ENCODE measurements at regions of chr10 and their contacts with region 1.

Region 1: DNA sequence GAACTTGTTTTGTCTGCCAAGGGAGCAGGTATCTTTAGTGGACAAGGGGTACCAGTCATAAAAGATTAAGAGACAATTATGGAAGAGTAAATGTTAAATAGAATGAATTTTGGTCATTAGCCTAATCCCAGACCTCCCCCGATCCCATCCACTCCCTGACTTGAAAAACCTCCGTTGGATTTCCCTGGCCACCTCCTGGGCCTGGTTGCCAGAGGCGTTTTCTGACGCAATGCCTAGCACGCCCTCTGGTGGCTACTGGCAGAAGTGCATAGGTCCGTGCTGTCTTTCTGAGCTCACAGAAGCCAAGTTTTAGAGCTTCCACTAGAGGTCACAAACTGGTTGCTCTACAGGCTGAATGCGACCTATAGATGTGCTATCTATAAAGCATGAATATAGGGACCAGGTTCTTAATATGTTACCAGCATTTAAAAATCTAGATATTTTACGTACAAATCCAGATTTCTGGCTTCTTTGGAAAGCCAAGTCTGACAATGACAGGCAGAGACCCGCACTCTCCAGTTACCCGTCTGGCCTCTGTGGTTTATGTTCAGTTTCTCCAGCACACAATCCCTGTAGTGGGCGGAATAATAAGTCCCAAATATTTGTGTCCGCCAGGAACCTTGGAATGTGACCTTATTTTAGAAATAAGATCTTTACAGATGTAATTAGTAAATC is 39.8 kb downstream of the SPOCK2 start:
- DNase-seq: peak; percentile 94
- H3K4me3 ChIP-seq: no peak overlapping the region
- H3K27ac ChIP-seq: no peak overlapping the region
- H3K4me1 ChIP-seq: no peaks in the 10 kb centered on the region
- H3K27me3 ChIP-seq: no peaks in the 10 kb centered on the region
- CTCF ChIP-seq: peak; percentile 96 to 99
- POLR2A ChIP-seq: no peak

Region 2: GRCh38 chr10:71902351-71902750 is 146.2 kb before region 1 on chr10:
- CTCF ChIA-PET with region 1: interaction called, 199 read pairs
- POLR2A ChIA-PET with region 1: no interaction called
- dilution Hi-C with region 1: no loop called
- intact Hi-C with region 1: no loop called
- DNase-seq: no peak
- H3K4me3 ChIP-seq: no peak overlapping the region
- H3K27ac ChIP-seq: no peak overlapping the region
- H3K4me1 ChIP-seq: peaks cover 4% of the 10 kb centered on the region
- H3K27me3 ChIP-seq: no peaks in the 10 kb centered on the region
- CTCF ChIP-seq: no peak
- POLR2A ChIP-seq: no peak

Region 3: GRCh38 chr10:71974489-71975021 is 74.0 kb before region 1 on chr10:
- CTCF ChIA-PET with region 1: interaction called, 31 read pairs
- POLR2A ChIA-PET with region 1: no interaction called
- dilution Hi-C with region 1: no loop called
- intact Hi-C with region 1: loop called (anchors 1 kb)
- DNase-seq: peak; percentile 45
- H3K4me3 ChIP-seq: no peak overlapping the region
- H3K27ac ChIP-seq: peak overlapping the region; percentile 16
- H3K4me1 ChIP-seq: peaks cover 44% of the 10 kb centered on the region
- H3K27me3 ChIP-seq: no peaks in the 10 kb centered on the region
- CTCF ChIP-seq: no peak
- POLR2A ChIP-seq: no peak

Region 4: DNA sequence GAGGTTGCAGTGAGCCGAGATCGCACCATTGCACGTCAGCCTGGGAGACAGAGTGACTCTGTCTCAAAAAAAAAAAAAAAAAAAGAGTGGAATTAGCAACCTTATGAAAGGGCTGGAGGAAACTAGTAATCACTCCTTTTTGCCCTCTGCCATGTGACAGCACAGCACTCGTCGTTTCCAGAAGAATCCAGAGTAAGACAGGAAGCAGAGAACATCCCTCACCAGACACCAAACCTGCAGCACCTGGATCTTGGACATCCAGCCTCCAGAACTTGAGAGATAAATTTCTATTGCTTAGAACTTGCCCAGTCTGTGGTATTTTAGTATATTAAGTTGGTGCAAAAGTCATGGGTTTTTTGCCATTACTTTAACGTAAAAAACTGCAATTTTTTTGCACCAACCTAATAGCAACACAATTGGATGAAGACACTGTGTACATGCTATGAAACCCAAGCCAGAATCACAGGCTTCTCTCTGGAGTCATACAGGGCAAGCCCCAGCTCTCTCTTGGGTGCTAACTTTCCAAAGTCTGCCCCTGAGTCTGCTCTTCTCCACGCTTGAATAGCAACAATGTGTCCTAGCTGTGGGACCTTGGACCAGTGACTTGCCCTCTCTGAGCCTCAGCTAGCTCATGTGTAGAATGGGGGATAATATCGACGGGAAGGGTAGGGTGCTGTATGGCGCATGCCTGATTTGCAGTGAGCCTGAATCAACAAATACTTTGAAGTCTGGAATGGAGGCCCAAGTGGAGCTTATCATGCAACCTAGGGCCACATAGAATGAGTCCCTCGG is 29.3 kb before region 1 on chr10:
- CTCF ChIA-PET with region 1: interaction called, 13 read pairs
- POLR2A ChIA-PET with region 1: no interaction called
- dilution Hi-C with region 1: no loop called
- intact Hi-C with region 1: no loop called
- DNase-seq: no peak
- H3K4me3 ChIP-seq: no peak overlapping the region
- H3K27ac ChIP-seq: no peak overlapping the region
- H3K4me1 ChIP-seq: peaks cover 7% of the 10 kb centered on the region
- H3K27me3 ChIP-seq: peaks cover 2 to 7% of the 10 kb centered on the region in 2 experiments
- CTCF ChIP-seq: no peak
- POLR2A ChIP-seq: no peak

Region 5: GRCh38 chr10:72069751-72070526 is 21.4 kb after region 1 on chr10:
- CTCF ChIA-PET with region 1: interaction called, 27 read pairs
- POLR2A ChIA-PET with region 1: no interaction called
- dilution Hi-C with region 1: no loop called
- intact Hi-C with region 1: no loop called
- DNase-seq: no peak
- H3K4me3 ChIP-seq: no peak overlapping the region
- H3K27ac ChIP-seq: no peak overlapping the region
- H3K4me1 ChIP-seq: no peaks in the 10 kb centered on the region
- H3K27me3 ChIP-seq: no peaks in the 10 kb centered on the region
- CTCF ChIP-seq: peak in 1 of 2 donors; percentile 1
- POLR2A ChIP-seq: no peak

Region 6: DNA sequence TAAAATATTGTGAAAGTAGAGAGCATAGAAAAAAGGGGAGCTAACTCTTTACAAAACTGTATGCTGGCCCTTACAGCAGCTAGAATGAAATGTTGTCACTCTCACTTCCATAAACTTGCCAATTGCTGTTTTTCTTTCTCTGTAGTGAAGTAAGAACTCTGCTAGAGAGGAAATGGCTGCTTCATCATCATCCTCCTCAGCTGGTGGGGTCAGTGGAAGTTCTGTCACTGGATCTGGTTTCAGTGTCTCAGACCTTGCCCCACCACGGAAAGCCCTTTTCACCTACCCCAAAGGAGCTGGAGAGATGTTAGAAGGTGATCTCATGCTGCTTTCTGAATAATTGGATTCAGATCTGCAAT is 175.1 kb after region 1 on chr10:
- CTCF ChIA-PET with region 1: interaction called, 55 read pairs
- POLR2A ChIA-PET with region 1: no interaction called
- dilution Hi-C with region 1: no loop called
- intact Hi-C with region 1: loop called (anchors 1 kb)
- DNase-seq: peak; percentile 59
- H3K4me3 ChIP-seq: no peak overlapping the region
- H3K27ac ChIP-seq: peak overlapping the region; percentile 67
- H3K4me1 ChIP-seq: peaks cover 11% of the 10 kb centered on the region
- H3K27me3 ChIP-seq: no peaks in the 10 kb centered on the region
- CTCF ChIP-seq: no peak
- POLR2A ChIP-seq: no peak

Region 7: DNA sequence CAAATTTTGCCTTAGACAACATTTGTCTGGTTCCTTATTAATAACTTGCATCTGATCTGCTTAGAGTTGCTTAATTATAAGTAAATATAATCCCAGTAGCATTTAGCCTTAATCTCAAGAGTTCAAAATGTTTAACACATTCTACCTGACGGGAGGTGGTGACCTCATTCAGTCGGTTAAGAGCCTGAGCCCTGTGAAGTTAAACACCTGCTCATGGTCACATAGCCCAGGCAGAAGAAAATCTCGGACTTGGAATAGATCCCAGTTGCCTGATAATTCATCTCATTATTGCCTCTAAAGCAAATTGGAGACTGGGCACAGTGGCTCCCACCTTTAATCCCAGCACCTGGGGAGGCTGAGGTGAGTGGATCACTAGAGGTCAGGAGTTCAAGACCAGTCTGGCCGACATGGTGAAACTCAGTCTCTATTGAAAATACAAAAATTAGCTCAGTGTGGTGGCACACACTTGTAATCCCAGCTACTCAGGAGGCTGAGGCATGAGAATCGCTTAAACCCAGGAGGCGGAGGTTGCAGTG is 186.0 kb after region 1 on chr10:
- CTCF ChIA-PET with region 1: no interaction called
- POLR2A ChIA-PET with region 1: no interaction called
- dilution Hi-C with region 1: no loop called
- intact Hi-C with region 1: no loop called
- DNase-seq: no peak
- H3K4me3 ChIP-seq: no peak overlapping the region
- H3K27ac ChIP-seq: no peak overlapping the region
- H3K4me1 ChIP-seq: no peaks in the 10 kb centered on the region
- H3K27me3 ChIP-seq: no peaks in the 10 kb centered on the region
- CTCF ChIP-seq: no peak
- POLR2A ChIP-seq: no peak